PC-9 (cell line): ENCODE measurements at regions of chr3 and their contacts with region 1.

Region 1: GRCh38 chr3:4978204-4978965 is 852 bp upstream of the BHLHE40 start:
- DNase-seq: peak; percentile 85 to 99
- H3K4me3 ChIP-seq: peak overlapping the region; percentile 69
- H3K27ac ChIP-seq: peak overlapping the region; percentile 100
- H3K4me1 ChIP-seq: peaks cover 26% of the 10 kb centered on the region
- H3K27me3 ChIP-seq: no peaks in the 10 kb centered on the region
- CTCF ChIP-seq: no peak

Region 2: GRCh38 chr3:4712143-4712542 is 266.2 kb before region 1 on chr3:
- CTCF ChIA-PET with region 1: interaction called, 54 read pairs
- POLR2A ChIA-PET with region 1: interaction called, 10 read pairs
- intact Hi-C with region 1: loop called (anchors 1 kb)
- DNase-seq: peak; percentile 69 to 91
- H3K4me3 ChIP-seq: 0 out of 2 replicates have a peak overlapping the region, but pooled peaks have one; percentile 23
- H3K27ac ChIP-seq: peak overlapping the region; percentile 87
- H3K4me1 ChIP-seq: peaks cover 13% of the 10 kb centered on the region
- H3K27me3 ChIP-seq: no peaks in the 10 kb centered on the region
- CTCF ChIP-seq: no peak

Region 3: GRCh38 chr3:4826237-4827100 is 151.9 kb before region 1 on chr3:
- CTCF ChIA-PET with region 1: interaction called, 4 read pairs
- POLR2A ChIA-PET with region 1: interaction called, 24 read pairs
- intact Hi-C with region 1: loop called (anchors 1 kb)
- DNase-seq: no peak
- H3K4me3 ChIP-seq: no peak overlapping the region
- H3K27ac ChIP-seq: peak overlapping the region; percentile 86
- H3K4me1 ChIP-seq: peaks cover 79% of the 10 kb centered on the region
- H3K27me3 ChIP-seq: no peaks in the 10 kb centered on the region
- CTCF ChIP-seq: no peak

Region 4: DNA sequence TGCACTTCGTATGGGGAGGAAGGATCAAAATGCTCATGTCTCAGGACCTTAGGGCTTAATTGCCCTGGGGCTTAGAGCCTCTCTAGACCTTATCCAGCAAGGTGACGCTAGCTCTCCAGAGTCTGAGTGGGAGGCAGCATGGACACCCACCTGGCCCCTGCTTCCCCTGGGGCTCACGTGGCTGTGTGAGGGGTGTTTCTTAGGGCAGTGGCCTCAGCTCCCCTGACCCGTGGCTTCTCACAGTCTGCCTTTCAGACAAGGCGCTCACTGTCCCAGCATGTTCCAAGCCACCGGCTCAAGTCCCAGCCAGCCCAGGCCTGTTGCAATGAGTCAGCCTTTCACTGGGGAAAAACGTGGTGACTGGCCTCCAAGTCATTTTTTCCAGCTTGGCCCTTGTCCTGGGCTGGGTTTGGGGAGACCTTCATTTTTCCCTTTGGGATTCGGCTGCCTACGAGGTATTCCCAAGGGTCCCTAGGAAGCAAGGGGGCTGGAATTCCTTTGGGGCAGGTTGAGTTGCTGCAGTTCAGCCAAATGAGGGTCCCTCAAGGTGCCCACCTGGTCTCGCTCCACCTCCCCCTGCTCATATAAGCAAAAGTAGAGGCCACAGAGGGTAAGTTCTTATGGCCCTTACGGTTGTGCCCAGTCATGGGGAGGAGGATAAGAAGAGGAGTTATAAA is 16.6 kb after region 1 on chr3:
- CTCF ChIA-PET with region 1: no interaction called
- POLR2A ChIA-PET with region 1: interaction called, 10 read pairs
- intact Hi-C with region 1: loop called (anchors 1 kb)
- DNase-seq: peak; percentile 55 to 81
- H3K4me3 ChIP-seq: no peak overlapping the region
- H3K27ac ChIP-seq: peak overlapping the region; percentile 37; the same call in 1 of the 2 replicates
- H3K4me1 ChIP-seq: peaks cover 14% of the 10 kb centered on the region; the same call in 1 of the 2 replicates
- H3K27me3 ChIP-seq: no peaks in the 10 kb centered on the region
- CTCF ChIP-seq: no peak

Region 5: GRCh38 chr3:5026331-5027218 is 48.2 kb after region 1 on chr3:
- CTCF ChIA-PET with region 1: interaction called, 5 read pairs
- POLR2A ChIA-PET with region 1: interaction called, 10 read pairs
- intact Hi-C with region 1: loop called (anchors 1 kb)
- DNase-seq: peak; percentile 64 to 87
- H3K4me3 ChIP-seq: peak overlapping the region; percentile 48; the same call in 1 of the 2 replicates
- H3K27ac ChIP-seq: peak overlapping the region; percentile 73
- H3K4me1 ChIP-seq: peaks cover 33% of the 10 kb centered on the region
- H3K27me3 ChIP-seq: no peaks in the 10 kb centered on the region
- CTCF ChIP-seq: peak; percentile 61

Region 6: DNA sequence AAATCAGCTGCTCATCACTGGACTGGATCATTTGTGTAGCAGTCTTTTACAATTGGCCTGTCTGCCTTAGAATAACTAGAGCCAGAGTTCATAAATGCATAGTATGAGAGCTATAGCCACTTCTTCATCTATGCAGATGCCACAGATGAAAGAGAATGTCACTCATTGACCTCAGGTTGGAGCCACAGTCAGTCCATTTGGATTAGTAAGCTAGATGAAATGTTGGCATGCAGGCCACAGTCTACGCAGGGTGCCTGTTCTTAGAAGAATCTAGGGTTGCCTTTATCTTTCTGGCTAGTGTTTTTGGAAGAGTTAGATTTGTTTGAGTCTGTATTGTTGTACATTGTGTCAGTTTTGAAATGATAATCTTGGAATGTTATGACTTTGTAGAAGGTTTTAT is 183.7 kb after region 1 on chr3:
- CTCF ChIA-PET with region 1: no interaction called
- POLR2A ChIA-PET with region 1: interaction called, 10 read pairs
- intact Hi-C with region 1: no loop called
- DNase-seq: peak; percentile 38 to 67
- H3K4me3 ChIP-seq: no peak overlapping the region
- H3K27ac ChIP-seq: no peak overlapping the region
- H3K4me1 ChIP-seq: peaks cover 30% of the 10 kb centered on the region
- H3K27me3 ChIP-seq: no peaks in the 10 kb centered on the region
- CTCF ChIP-seq: no peak

Region 7: DNA sequence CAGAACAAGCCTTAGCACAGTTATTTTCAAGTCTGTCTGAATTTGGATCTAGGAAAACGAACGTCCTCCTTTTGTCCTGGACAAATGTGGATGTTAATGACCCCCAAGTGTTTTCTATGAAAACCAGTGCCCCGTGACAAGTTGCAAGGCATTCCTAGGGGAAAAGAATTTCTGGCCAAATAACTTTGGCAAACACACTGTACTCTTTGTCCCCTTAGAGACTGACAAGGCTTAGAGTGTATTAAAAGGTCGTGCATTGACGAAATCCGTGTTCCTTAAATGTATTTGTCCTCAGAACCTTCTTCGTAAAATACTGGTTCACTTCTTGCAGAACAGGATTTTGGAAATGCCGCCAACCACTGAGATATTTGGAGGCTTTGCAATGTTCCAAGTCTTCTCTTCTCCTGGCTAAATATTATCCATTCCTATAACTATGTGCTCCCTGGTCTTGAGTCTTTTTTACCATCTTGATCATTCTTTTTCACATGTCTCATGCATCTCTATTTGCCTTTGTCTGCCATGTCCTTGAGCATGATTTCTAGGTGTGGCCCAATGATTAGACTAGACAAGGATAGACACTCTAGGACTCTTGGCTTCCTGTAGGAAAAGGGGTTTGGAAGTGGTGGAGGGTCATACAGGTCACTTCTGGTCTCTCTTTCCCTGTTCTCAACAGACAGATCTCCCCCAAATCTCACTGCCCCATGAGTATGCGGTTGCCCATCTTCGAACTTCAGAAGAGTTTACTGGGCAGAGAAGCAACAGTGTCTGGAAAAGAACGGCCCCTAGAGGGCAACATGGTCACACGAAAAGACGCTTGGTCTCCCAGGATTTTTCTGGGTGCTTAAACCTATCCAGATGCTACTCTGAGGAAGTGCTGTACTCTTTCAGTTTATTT is 326.7 kb after region 1 on chr3:
- CTCF ChIA-PET with region 1: no interaction called
- POLR2A ChIA-PET with region 1: no interaction called
- intact Hi-C with region 1: no loop called
- DNase-seq: peak; percentile 51 to 57
- H3K4me3 ChIP-seq: no peak overlapping the region
- H3K27ac ChIP-seq: no peak overlapping the region
- H3K4me1 ChIP-seq: no peaks in the 10 kb centered on the region
- H3K27me3 ChIP-seq: no peaks in the 10 kb centered on the region
- CTCF ChIP-seq: peak; percentile 76

Region 8: DNA sequence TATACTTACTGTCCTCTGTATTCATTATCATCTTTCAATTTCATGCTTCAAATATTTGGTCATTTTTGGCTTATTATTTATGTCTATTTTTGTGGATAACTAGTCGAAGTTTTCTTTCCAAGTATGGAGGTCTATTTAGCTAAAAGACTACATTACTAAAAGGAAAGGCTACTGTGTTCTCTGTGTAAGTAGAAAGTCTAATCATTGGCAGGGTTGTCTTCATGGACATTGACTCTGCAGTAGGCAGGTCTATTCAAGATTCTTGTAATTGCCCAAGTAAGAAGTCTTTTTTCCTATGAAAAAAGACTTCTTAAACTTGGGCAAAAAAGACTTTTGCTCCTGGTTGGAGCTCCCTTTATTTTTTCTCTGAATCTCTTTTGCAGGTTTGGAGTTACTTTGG is 1513.9 kb after region 1 on chr3:
- CTCF ChIA-PET with region 1: no interaction called
- POLR2A ChIA-PET with region 1: interaction called, 10 read pairs
- intact Hi-C with region 1: no loop called
- DNase-seq: no peak
- H3K4me3 ChIP-seq: peak overlapping the region; percentile 67
- H3K27ac ChIP-seq: no peak overlapping the region
- H3K4me1 ChIP-seq: peaks cover 15% of the 10 kb centered on the region
- H3K27me3 ChIP-seq: no peaks in the 10 kb centered on the region
- CTCF ChIP-seq: no peak